CD8-positive, alpha-beta T cell (primary cell): ENCODE measurements at regions of chr2 and their contacts with region 1.

Region 1: GRCh38 chr2:168450171-168450570 is 5.9 kb upstream of the CERS6 start:
- DNase-seq: peak in 2 of 9 experiments; percentile 24 to 55
- ATAC-seq: peak; percentile 78
- H3K4me3 ChIP-seq: no peak overlapping the region
- H3K4me3 Mint-ChIP-seq: no peak overlapping the region
- H3K27ac ChIP-seq: no peak overlapping the region
- H3K27ac Mint-ChIP-seq: peak overlapping the region; percentile 71
- H3K4me1 ChIP-seq: peaks cover 31% of the 10 kb centered on the region
- H3K4me1 Mint-ChIP-seq: peaks cover 32% of the 10 kb centered on the region
- H3K27me3 ChIP-seq: no peaks in the 10 kb centered on the region
- H3K27me3 Mint-ChIP-seq: no peaks in the 10 kb centered on the region
- CTCF ChIP-seq: no peak

Region 2: DNA sequence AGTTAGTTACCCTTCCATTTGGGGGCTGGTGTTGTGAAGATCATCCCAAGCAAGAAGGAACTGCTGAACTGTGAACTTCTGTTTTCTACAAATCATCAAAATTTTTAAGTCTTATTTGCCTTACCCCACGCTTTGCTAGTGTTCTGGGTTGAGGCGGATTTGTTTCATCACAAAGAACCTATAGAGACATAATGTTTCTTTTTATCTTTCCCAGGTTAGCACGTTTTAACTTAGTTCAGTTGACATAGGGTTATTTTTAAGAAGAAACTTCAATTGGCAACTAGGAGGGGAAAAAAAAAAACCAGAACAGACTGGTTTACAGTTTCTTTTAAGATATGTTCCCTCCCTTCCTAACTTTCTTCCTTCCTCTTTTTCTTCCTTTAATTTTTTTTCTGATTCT is 25.2 kb before region 1 on chr2:
- CTCF ChIA-PET with region 1: no interaction called
- POLR2A ChIA-PET with region 1: interaction called, 3 read pairs
- intact Hi-C with region 1: loop called in 1 of 2 experiments (anchors 1 kb)
- DNase-seq: no peak
- ATAC-seq: no peak
- H3K4me3 ChIP-seq: no peak overlapping the region
- H3K4me3 Mint-ChIP-seq: no peak overlapping the region
- H3K27ac ChIP-seq: no peak overlapping the region
- H3K27ac Mint-ChIP-seq: no peak overlapping the region
- H3K4me1 ChIP-seq: no peaks in the 10 kb centered on the region
- H3K4me1 Mint-ChIP-seq: peaks cover 38% of the 10 kb centered on the region
- H3K27me3 ChIP-seq: no peaks in the 10 kb centered on the region
- H3K27me3 Mint-ChIP-seq: no peaks in the 10 kb centered on the region
- CTCF ChIP-seq: no peak

Region 3: DNA sequence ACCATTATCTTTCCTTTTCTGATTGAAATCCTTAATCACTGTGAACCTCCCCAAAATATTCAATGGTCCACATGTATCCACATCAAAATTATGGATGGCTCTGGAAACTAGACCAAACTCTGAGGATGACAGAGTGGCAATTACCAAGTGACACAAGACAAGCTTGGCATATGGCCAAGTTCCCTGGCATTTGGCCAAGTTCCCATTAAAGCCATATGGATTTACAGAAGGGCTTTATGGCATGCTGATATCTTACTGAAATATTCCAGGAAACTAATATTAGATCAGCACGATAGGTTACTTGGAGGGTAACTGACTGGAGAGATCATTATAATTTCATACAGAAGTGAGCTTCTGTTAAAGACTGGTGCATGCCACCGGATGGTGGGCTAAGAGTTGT is 16.0 kb before region 1 on chr2:
- CTCF ChIA-PET with region 1: no interaction called
- POLR2A ChIA-PET with region 1: interaction called, 4 read pairs
- intact Hi-C with region 1: loop called in 1 of 2 experiments (anchors 2 kb)
- DNase-seq: peak in 1 of 9 experiments; percentile 17
- ATAC-seq: no peak
- H3K4me3 ChIP-seq: no peak overlapping the region
- H3K4me3 Mint-ChIP-seq: no peak overlapping the region
- H3K27ac ChIP-seq: no peak overlapping the region
- H3K27ac Mint-ChIP-seq: no peak overlapping the region
- H3K4me1 ChIP-seq: peaks cover 49% of the 10 kb centered on the region
- H3K4me1 Mint-ChIP-seq: peaks cover 64% of the 10 kb centered on the region
- H3K27me3 ChIP-seq: no peaks in the 10 kb centered on the region
- H3K27me3 Mint-ChIP-seq: no peaks in the 10 kb centered on the region
- CTCF ChIP-seq: no peak

Region 4: GRCh38 chr2:168607992-168608391 is 157.8 kb after region 1 on chr2:
- CTCF ChIA-PET with region 1: no interaction called
- POLR2A ChIA-PET with region 1: no interaction called
- intact Hi-C with region 1: no loop called
- DNase-seq: no peak
- ATAC-seq: no peak
- H3K4me3 ChIP-seq: no peak overlapping the region
- H3K4me3 Mint-ChIP-seq: no peak overlapping the region
- H3K27ac ChIP-seq: no peak overlapping the region
- H3K27ac Mint-ChIP-seq: no peak overlapping the region
- H3K4me1 ChIP-seq: peaks cover 16% of the 10 kb centered on the region
- H3K4me1 Mint-ChIP-seq: peaks cover 44% of the 10 kb centered on the region
- H3K27me3 ChIP-seq: no peaks in the 10 kb centered on the region
- H3K27me3 Mint-ChIP-seq: no peaks in the 10 kb centered on the region
- CTCF ChIP-seq: no peak